ENCODE measurements at regions of chr1 and their contacts with region 1.

Region 1: GRCh38 chr1:117067533-117068370 is 7.6 kb downstream of the TTF2 start:
- DNase-seq: peak in 2 of 5 donors; percentile 12 to 55
- H3K4me3 ChIP-seq: no peak overlapping the region
- H3K4me3 Mint-ChIP-seq: no peak overlapping the region
- H3K27ac ChIP-seq: no peak overlapping the region
- H3K27ac Mint-ChIP-seq: peak overlapping the region in 1 of 8 donors; percentile 17
- H3K4me1 ChIP-seq: no peaks in the 10 kb centered on the region
- H3K4me1 Mint-ChIP-seq: peaks cover 22 to 37% (median 28%) of the 10 kb centered on the region in 3 donors
- H3K27me3 ChIP-seq: no peaks in the 10 kb centered on the region
- H3K27me3 Mint-ChIP-seq: no peaks in the 10 kb centered on the region

Region 2: GRCh38 chr1:117128323-117129079 is 60.7 kb after region 1 on chr1:
- CTCF ChIA-PET with region 1: interaction called, 23 read pairs
- POLR2A ChIA-PET with region 1: no interaction called
- DNase-seq: peak in 2 of 5 donors; percentile 16 to 26
- H3K4me3 ChIP-seq: no peak overlapping the region
- H3K4me3 Mint-ChIP-seq: no peak overlapping the region
- H3K27ac ChIP-seq: no peak overlapping the region
- H3K27ac Mint-ChIP-seq: no peak overlapping the region
- H3K4me1 ChIP-seq: no peaks in the 10 kb centered on the region
- H3K4me1 Mint-ChIP-seq: peaks cover 0 to 2% (median 0%) of the 10 kb centered on the region in 3 donors
- H3K27me3 ChIP-seq: no peaks in the 10 kb centered on the region
- H3K27me3 Mint-ChIP-seq: peaks cover 4 to 7% of the 10 kb centered on the region in 2 donors

Region 3: DNA sequence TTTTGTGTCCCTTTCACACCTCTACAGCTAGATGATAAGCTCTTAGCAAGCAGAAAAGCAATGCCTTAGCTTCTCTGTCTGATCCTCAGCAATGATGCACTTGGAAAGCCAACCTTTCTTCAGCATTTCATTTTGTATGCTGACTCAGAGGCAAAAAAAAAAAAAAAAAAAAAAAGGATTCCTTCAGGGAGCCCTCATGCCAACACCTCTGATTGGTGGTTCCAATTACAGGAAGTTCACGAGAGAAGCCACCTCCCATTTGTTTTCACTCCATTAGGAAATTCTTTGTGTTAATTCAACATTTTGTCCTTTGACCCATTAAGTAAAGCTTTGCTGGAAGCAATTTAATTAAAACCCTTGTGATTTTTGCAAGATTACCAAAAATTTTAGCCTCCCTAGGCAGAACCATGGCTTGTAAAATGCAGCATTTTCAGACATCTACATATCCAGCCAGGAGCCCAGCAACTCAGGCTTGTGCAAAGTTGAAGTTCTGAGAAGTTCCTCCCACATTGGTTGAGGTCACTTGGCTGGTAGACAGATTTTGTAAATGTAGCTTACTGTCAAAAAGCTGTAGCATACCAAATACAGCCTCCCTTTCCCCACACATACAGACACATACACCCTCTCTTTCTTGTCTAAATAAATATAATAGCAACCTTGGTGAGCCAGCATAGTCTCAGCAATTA is 170.1 kb after region 1 on chr1:
- CTCF ChIA-PET with region 1: no interaction called
- POLR2A ChIA-PET with region 1: no interaction called
- DNase-seq: no peak
- H3K4me3 ChIP-seq: no peak overlapping the region
- H3K4me3 Mint-ChIP-seq: no peak overlapping the region
- H3K27ac ChIP-seq: no peak overlapping the region
- H3K27ac Mint-ChIP-seq: no peak overlapping the region
- H3K4me1 ChIP-seq: no peaks in the 10 kb centered on the region
- H3K4me1 Mint-ChIP-seq: no peaks in the 10 kb centered on the region
- H3K27me3 ChIP-seq: no peaks in the 10 kb centered on the region
- H3K27me3 Mint-ChIP-seq: peaks cover 14 to 36% of the 10 kb centered on the region in 2 donors

Measured in CD8-positive, alpha-beta memory T cell (primary cell).